Activated CD4-positive, alpha-beta T cell treated with anti-CD3 and anti-CD28 coated beads for 36 hours (primary cell): ENCODE measurements at regions of chr6 and their contacts with region 1.

Region 1: DNA sequence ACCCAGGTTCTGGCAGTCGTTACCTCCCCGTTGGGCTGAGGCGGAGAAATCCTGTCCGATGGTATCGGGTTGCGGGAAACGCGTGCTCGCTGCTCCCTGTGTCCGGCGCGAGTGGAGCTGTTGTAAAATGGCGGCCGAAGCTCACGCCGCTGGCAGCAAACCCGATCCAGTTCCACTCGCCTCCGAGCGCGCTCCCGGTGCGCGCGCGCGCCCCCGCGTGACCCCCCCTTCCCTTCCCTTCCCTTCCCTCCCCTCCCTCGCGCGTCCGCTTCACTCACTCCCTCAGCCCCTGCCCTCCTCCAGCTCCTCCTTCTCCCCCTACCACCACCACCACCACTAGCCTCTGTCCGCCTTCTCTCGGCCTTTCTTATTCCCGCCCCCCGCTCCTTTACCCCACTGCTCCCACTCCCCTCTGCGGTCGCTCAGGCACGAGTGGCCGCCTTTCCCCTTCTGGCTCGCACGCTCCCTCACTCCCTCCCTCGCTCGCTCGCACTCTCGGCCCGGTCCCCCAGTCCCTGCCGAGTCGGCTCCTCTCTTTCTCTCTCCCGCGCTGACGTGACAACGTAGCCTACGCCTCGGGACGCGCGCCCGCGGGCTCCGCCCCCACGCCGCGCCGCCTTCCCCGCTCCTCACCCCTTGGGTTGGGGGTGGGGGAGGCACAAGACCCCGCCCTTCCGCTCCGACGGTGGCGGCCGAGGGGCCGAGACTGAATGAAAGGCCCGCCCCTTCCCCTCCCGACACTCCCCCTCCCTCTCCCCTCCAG is at the start of gene SYNCRIP:
- DNase-seq: peak; percentile 99
- ATAC-seq: peak; percentile 82
- H3K4me3 Mint-ChIP-seq: peak within 1 kb of the TSS; percentile 88
- H3K27ac Mint-ChIP-seq: peak within 1 kb of the TSS; percentile 99
- H3K4me1 Mint-ChIP-seq: peaks cover 45% of the 10 kb centered on the region
- H3K27me3 Mint-ChIP-seq: no peaks in the 10 kb centered on the region
- total RNA-seq, gene SYNCRIP: 156 to 191 TPM

Region 2: GRCh38 chr6:83859410-83860358 is 1783.3 kb before region 1 on chr6 and contains the start of gene CYB5R4:
- CTCF ChIA-PET with region 1: no interaction called
- POLR2A ChIA-PET with region 1: no interaction called
- intact Hi-C with region 1: loop called in 1 of 2 experiments (anchors 10 kb)
- DNase-seq: peak; percentile 96
- ATAC-seq: peak; percentile 98
- H3K4me3 Mint-ChIP-seq: peak within 1 kb of the TSS; percentile 97
- H3K27ac Mint-ChIP-seq: peak within 1 kb of the TSS; percentile 92
- H3K4me1 Mint-ChIP-seq: peaks cover 27% of the 10 kb centered on the region
- H3K27me3 Mint-ChIP-seq: peaks cover 11% of the 10 kb centered on the region
- total RNA-seq, gene CYB5R4: 21.9 to 28.2 TPM

Region 3: DNA sequence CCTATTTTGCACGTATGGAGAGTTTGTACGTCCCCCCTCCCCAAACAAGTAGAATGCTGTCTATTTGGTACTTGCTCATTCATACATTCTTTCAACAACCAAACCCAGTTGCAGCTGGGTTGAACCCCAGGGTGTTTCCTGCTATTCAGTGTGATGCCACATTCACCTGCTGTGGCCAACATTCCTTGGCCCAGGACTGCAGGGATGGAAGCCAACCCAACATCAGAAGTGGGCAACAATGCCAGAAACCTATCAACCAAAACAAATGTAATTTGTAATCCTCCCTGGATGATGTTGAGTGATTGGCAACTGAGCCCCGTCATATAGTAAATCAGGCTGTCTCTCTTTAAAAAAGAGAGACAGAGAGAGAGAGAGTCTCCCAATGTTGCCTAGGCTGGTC is 184.2 kb before region 1 on chr6:
- CTCF ChIA-PET with region 1: no interaction called
- POLR2A ChIA-PET with region 1: no interaction called
- intact Hi-C with region 1: no loop called
- DNase-seq: no peak
- ATAC-seq: no peak
- H3K4me3 Mint-ChIP-seq: no peak overlapping the region
- H3K27ac Mint-ChIP-seq: peak overlapping the region; percentile 12
- H3K4me1 Mint-ChIP-seq: peaks cover 81% of the 10 kb centered on the region
- H3K27me3 Mint-ChIP-seq: peaks cover 9% of the 10 kb centered on the region

Region 4: GRCh38 chr6:85628353-85628752 is 14.6 kb before region 1 on chr6:
- CTCF ChIA-PET with region 1: interaction called, 11 read pairs
- POLR2A ChIA-PET with region 1: interaction called, 11 read pairs
- intact Hi-C with region 1: loop called in 1 of 2 experiments (anchors 1 kb)
- DNase-seq: no peak
- ATAC-seq: peak; percentile 44
- H3K4me3 Mint-ChIP-seq: no peak overlapping the region
- H3K27ac Mint-ChIP-seq: peak overlapping the region; percentile 57
- H3K4me1 Mint-ChIP-seq: peaks cover 58% of the 10 kb centered on the region
- H3K27me3 Mint-ChIP-seq: no peaks in the 10 kb centered on the region

Region 5: DNA sequence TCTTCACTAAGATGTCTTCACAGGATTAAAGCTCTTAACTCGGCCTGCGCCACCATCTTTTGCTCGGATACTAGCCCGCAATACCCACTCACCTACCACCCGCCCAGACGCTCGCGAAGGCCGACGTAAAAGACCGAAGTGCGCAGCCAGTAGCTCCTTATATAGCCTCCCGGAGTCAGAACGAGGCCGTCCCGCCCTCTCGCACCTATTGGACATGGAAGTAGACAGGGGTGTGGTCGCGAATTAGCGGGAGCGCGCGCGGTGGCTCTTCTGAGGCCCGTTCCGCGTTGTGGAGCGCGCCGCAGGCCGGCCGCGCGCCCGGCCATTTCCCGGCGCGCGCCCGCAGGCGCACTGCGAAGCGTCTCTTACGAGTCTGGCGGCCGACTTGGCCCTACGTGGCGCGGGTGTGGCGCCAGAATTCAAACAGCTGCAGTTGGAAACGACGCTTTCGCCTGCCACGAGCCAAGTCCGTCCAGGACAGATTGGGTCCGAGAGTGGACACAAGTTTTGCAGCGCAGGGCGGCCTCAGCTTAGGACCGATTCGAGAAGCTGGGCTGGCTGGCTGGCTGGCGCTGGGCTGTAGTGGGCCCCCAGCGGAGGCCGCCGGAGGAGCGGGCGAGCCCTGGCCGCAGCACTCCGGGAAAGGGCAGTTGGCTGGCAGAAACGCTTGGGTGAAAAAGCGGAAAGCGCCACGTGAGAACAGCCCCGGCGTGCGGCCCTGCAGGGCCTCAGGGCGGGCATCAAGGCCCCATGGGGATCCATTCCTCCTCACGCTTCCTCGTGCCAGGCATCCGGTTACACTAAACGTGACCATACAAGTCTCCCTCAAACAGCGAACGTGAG is 35.9 kb after region 1 on chr6:
- CTCF ChIA-PET with region 1: interaction called, 9 read pairs
- POLR2A ChIA-PET with region 1: interaction called, 265 read pairs
- intact Hi-C with region 1: loop called (anchors 1 kb)
- DNase-seq: peak; percentile 98
- ATAC-seq: peak; percentile 87
- H3K4me3 Mint-ChIP-seq: peak overlapping the region; percentile 90
- H3K27ac Mint-ChIP-seq: peak overlapping the region; percentile 93
- H3K4me1 Mint-ChIP-seq: peaks cover 33% of the 10 kb centered on the region
- H3K27me3 Mint-ChIP-seq: no peaks in the 10 kb centered on the region

Region 6: DNA sequence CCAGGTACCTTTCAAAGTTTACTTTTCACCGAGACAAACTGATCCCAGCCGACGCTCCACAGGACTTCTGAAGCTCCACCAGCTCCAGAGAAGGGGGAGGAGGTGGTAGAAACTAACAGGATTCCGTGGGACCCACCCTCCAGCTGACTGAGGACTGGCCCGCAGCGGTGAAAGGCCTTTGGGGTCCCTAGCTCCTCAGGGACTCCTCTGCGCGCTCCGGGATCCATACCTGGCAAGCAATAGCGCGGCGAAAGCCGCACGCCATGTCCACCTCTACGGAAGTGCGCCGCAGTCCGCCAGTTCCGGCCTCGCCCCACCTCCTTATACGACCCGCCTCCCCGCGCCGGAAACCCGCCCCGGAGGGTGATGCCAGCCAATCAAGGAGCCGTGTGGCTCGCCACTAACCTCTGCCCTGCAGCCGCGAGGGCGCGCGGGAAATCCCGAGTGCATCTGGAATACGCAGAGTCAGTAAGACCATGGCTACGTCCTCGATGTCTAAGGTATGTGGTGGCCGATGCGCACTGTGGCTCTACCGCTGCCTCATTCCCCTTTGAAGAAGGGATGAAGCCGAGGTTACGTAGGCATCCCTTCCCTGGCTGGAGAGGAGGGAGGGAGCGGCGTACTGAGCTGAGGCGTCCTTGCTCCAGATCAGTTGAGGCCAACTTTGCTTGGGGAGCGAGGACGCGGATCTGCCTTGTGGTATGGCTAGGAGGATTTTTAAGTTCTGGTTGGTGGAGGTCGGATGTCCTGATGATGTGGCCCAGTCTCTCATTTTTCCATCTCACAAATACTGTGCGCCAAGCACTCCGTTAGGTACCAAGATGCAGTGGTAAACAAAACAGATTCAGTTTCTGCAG is 1947.0 kb after region 1 on chr6 and contains the starts of genes ORC3 and RARS2:
- CTCF ChIA-PET with region 1: no interaction called
- POLR2A ChIA-PET with region 1: no interaction called
- intact Hi-C with region 1: loop called in 1 of 2 experiments (anchors 5 kb)
- DNase-seq: peak; percentile 98
- ATAC-seq: peak; percentile 100
- H3K4me3 Mint-ChIP-seq: peak within 1 kb of the TSS; percentile 86
- H3K27ac Mint-ChIP-seq: peak within 1 kb of the TSS; percentile 94
- H3K4me1 Mint-ChIP-seq: peaks cover 51% of the 10 kb centered on the region
- H3K27me3 Mint-ChIP-seq: no peaks in the 10 kb centered on the region
- total RNA-seq, gene ORC3: 38.8 to 42.6 TPM
- total RNA-seq, gene RARS2: 20.8 to 24.7 TPM